OCI-LY7 (cell line): ENCODE measurements at regions of chr3 and their contacts with region 1.

Region 1: DNA sequence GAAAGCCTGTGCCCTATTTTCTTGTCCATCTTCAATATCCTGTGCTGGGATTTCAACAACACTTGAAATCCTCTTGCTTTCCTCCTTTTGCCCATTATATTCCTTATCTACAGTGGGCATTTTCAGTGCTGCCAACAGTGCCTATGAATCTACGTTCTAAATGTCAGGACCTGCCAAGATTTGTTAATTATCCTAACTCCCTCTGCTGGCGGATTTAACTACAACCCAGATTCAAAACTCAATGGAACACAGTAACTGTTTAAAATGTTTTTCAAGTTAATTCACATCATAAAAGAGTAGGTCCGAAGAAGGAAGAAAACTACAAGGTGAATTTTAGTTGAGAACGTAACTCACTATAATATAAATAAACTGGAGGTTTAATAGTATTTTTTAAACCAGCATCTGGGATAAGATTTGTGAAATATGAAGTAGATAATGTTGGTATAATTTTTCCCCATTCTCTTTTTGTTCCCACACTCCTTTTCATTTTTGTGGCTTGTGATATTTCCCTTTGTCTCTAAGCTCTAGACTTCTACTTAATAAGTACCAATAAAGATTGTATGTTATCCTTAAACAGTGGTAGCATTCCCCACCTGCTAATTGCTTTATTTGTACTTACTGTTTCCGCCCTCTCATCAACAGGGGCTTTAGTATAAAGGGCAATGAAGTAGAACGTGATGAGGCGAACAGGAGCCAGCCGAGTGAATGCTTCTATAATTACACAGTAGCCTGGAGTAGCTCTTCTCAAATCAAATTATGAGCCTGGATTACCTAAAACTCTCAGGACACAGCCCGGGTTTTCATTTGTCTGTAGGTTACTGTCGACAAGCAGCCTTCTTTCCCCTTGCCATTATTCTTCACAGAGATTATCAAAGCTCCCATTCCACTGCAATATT is 302.5 kb upstream of the ATP11B start:
- DNase-seq: peak; percentile 78
- H3K4me3 ChIP-seq: peak overlapping the region; percentile 12
- H3K27ac ChIP-seq: peak overlapping the region; percentile 14
- H3K4me1 ChIP-seq: peaks cover 49% of the 10 kb centered on the region
- CTCF ChIP-seq: peak; percentile 92

Region 2: GRCh38 chr3:182058488-182058887 is 432.4 kb before region 1 on chr3:
- CTCF ChIA-PET with region 1: no interaction called
- POLR2A ChIA-PET with region 1: no interaction called
- intact Hi-C with region 1: no loop called
- DNase-seq: no peak
- H3K4me3 ChIP-seq: no peak overlapping the region
- H3K27ac ChIP-seq: no peak overlapping the region
- H3K4me1 ChIP-seq: no peaks in the 10 kb centered on the region
- CTCF ChIP-seq: no peak

Region 3: DNA sequence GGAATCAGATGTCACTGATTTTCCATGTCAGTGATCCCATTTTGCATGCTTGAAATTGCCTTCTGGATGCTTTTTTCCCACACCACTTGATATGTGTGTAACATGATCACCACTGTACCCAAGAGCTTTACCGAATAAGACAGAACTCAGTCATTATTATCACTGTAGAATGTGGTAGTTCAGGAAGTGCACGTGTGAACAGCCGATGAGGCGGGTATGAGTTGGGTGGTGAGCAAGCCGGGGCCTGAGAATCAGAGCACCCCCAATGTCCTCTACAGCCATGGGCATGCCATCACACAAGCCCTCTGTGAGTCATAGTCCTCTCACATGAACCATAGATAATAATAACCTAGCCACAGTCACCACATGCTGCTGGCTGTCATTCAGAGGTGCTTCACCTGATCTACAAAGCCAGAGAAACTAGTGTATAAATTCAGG is 308.3 kb before region 1 on chr3:
- CTCF ChIA-PET with region 1: no interaction called
- POLR2A ChIA-PET with region 1: no interaction called
- intact Hi-C with region 1: no loop called
- DNase-seq: no peak
- H3K4me3 ChIP-seq: no peak overlapping the region
- H3K27ac ChIP-seq: no peak overlapping the region
- H3K4me1 ChIP-seq: no peaks in the 10 kb centered on the region
- CTCF ChIP-seq: no peak

Region 4: GRCh38 chr3:182258538-182259177 is 232.2 kb before region 1 on chr3:
- CTCF ChIA-PET with region 1: no interaction called
- POLR2A ChIA-PET with region 1: no interaction called
- intact Hi-C with region 1: loop called (anchors 5 kb)
- DNase-seq: peak; percentile 65
- H3K4me3 ChIP-seq: no peak overlapping the region
- H3K27ac ChIP-seq: no peak overlapping the region
- H3K4me1 ChIP-seq: peaks cover 21% of the 10 kb centered on the region
- CTCF ChIP-seq: peak; percentile 93

Region 5: GRCh38 chr3:182325213-182325941 is 165.5 kb before region 1 on chr3:
- CTCF ChIA-PET with region 1: no interaction called
- POLR2A ChIA-PET with region 1: interaction called, 4 read pairs
- intact Hi-C with region 1: loop called (anchors 5 kb)
- DNase-seq: peak; percentile 92
- H3K4me3 ChIP-seq: peak overlapping the region; percentile 40
- H3K27ac ChIP-seq: peak overlapping the region; percentile 84
- H3K4me1 ChIP-seq: peaks cover 69% of the 10 kb centered on the region
- CTCF ChIP-seq: no peak

Region 6: DNA sequence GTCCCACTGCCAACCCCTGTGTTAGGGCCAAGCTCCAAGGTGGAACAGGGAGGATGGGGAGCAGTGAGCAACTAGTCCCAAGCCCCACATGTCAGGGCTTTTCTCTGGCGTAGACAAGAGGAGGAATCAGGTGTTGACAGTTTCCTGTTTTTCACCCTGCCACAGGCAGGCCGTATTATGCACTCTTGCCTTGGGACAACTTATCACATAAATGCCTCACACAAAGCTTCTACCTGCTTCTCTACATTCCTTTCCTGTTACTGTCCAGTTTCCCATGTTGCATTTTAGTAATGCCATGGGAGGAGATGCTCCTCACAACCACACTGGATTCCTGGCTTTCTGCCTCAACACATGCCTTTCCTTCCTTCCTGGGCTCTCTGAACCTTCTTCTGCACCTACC is 78.8 kb before region 1 on chr3:
- CTCF ChIA-PET with region 1: no interaction called
- POLR2A ChIA-PET with region 1: interaction called, 4 read pairs
- intact Hi-C with region 1: loop called (anchors 5 kb)
- DNase-seq: peak; percentile 55
- H3K4me3 ChIP-seq: peak overlapping the region; percentile 68
- H3K27ac ChIP-seq: peak overlapping the region; percentile 96
- H3K4me1 ChIP-seq: peaks cover 95% of the 10 kb centered on the region
- CTCF ChIP-seq: no peak

Region 7: DNA sequence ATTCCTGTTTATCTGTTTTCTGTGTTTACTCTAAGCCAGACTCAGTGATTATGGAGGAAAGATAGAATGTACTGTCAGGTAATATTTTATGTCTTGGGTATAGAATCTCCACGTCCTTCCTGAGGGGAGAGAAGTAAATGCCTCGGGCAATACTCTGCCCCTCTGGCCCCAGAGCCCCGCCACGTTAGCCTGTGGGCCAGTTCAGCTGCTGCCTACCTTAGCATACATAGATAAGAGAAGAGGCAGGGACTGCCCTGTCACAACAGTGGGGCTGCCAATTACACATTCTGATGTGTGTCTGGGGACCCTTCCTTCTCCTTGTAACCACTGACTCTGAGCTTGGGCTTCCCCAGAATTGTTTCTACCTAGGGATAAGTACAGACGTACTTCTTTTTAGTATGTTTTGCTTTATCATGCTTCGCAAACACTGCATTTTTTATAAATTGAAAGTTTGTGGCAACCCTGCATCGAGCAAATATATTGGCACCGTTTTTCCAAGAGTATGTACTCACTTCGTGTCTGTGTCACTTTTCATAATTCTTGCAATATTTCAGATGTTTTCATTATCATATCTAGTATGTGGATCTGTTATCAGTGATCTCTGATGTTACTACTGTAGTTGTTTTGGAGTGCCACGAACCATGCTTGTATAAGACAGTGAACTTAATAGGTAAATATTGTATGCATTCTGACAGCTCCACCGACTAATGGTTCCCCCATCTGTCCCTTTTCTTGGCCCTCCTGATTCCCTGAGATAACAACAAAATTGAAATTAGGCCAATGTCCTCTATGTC is 45.1 kb before region 1 on chr3:
- CTCF ChIA-PET with region 1: no interaction called
- POLR2A ChIA-PET with region 1: no interaction called
- intact Hi-C with region 1: no loop called
- DNase-seq: no peak
- H3K4me3 ChIP-seq: no peak overlapping the region
- H3K27ac ChIP-seq: no peak overlapping the region
- H3K4me1 ChIP-seq: no peaks in the 10 kb centered on the region
- CTCF ChIP-seq: no peak

Region 8: DNA sequence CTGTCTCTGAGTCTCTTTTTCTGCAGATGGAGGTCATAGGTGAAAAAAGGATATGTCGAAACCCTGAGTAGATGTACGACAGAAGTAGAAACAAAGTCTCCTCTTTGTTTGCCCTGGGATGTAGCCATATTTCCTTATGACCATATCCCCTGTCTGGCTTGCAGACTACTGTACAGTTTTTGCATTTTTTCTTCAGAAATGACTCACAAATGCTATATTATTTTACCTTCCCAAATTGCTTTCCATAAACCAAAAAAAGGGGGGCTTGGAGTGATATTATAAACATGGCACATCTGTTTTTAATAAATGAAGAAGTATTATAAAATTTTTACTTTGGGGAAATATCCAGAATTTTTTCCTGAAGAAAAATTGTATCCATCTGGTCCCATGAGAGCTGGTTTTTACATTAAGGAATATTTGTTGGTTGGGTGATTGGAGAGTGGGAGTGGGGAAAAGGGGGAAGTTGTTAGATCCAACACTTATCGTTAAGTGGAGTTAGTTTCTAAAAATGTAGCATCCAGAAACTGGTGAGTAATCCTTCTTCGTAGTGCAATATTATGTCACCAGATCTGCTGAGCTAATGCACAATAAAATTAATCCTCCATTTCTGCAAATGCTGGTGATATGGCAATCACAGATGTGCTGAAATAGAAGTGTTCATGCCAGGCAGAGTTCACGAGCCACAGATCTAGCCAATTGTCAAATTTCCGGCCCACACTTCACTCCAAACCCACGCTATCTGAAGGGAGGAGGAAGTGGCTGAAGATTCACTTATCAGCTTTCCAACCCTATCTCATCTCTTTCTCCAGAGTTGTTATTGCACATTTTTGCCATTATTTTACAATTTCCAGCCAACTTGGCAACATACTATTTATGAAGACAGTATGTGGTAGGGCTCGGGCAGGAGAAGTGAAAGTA is 11.2 kb before region 1 on chr3:
- CTCF ChIA-PET with region 1: interaction called, 4 read pairs
- POLR2A ChIA-PET with region 1: interaction called, 13 read pairs
- intact Hi-C with region 1: no loop called
- DNase-seq: no peak
- H3K4me3 ChIP-seq: no peak overlapping the region
- H3K27ac ChIP-seq: no peak overlapping the region
- H3K4me1 ChIP-seq: peaks cover 15% of the 10 kb centered on the region
- CTCF ChIP-seq: no peak

Region 9: DNA sequence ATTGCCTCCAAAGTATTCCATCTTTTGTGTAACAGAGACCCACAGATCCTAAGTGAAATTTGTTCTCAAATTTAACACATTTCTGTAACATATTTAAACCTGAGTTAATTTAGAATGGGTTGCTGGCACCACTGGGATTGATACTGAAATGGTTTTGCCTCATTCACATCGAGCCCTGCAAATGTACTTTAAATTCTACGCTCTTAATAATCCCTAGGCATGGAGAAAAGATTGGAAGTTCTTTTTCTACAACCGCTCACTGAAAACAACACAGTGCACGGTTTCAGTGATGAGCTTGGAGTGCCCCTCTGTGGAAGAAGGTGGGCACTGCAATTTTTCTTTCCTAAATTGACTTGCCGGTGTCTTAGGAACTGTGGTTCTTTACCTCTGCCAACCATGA is 192.6 kb after region 1 on chr3:
- CTCF ChIA-PET with region 1: no interaction called
- POLR2A ChIA-PET with region 1: no interaction called
- intact Hi-C with region 1: loop called (anchors 5 kb)
- DNase-seq: peak; percentile 77
- H3K4me3 ChIP-seq: no peak overlapping the region
- H3K27ac ChIP-seq: peak overlapping the region; percentile 54
- H3K4me1 ChIP-seq: peaks cover 12% of the 10 kb centered on the region
- CTCF ChIP-seq: peak; percentile 99